ENCODE measurements at regions of chr3 and their contacts with region 1.

Region 1: GRCh38 chr3:41274944-41275668 is 75.8 kb downstream of the CTNNB1 start:
- DNase-seq: peak; percentile 84 to 91
- H3K4me3 ChIP-seq: no peak overlapping the region
- H3K4me3 Mint-ChIP-seq: peak overlapping the region; percentile 54
- H3K27ac Mint-ChIP-seq: peak overlapping the region; percentile 91
- H3K4me1 ChIP-seq: peaks cover 42% of the 10 kb centered on the region
- H3K4me1 Mint-ChIP-seq: peaks cover 41% of the 10 kb centered on the region
- H3K27me3 ChIP-seq: no peaks in the 10 kb centered on the region
- H3K27me3 Mint-ChIP-seq: no peaks in the 10 kb centered on the region
- CTCF ChIP-seq: no peak

Region 2: GRCh38 chr3:41204369-41204768 is 70.7 kb before region 1 on chr3:
- CTCF ChIA-PET with region 1: no interaction called
- POLR2A ChIA-PET with region 1: no interaction called
- intact Hi-C with region 1: loop called (anchors 1 kb)
- DNase-seq: no peak
- H3K4me3 ChIP-seq: no peak overlapping the region
- H3K4me3 Mint-ChIP-seq: no peak overlapping the region
- H3K27ac Mint-ChIP-seq: no peak overlapping the region
- H3K4me1 ChIP-seq: peaks cover 52% of the 10 kb centered on the region
- H3K4me1 Mint-ChIP-seq: peaks cover 32% of the 10 kb centered on the region
- H3K27me3 ChIP-seq: no peaks in the 10 kb centered on the region
- H3K27me3 Mint-ChIP-seq: no peaks in the 10 kb centered on the region
- CTCF ChIP-seq: no peak

Region 3: GRCh38 chr3:41244620-41245336 is 30.3 kb before region 1 on chr3:
- CTCF ChIA-PET with region 1: no interaction called
- POLR2A ChIA-PET with region 1: no interaction called
- intact Hi-C with region 1: loop called (anchors 2 kb)
- DNase-seq: no peak
- H3K4me3 ChIP-seq: no peak overlapping the region
- H3K4me3 Mint-ChIP-seq: no peak overlapping the region
- H3K27ac Mint-ChIP-seq: no peak overlapping the region
- H3K4me1 ChIP-seq: peaks cover 6% of the 10 kb centered on the region; the same call in 1 of the 2 replicates
- H3K4me1 Mint-ChIP-seq: no peaks in the 10 kb centered on the region
- H3K27me3 ChIP-seq: no peaks in the 10 kb centered on the region
- H3K27me3 Mint-ChIP-seq: no peaks in the 10 kb centered on the region
- CTCF ChIP-seq: no peak

Region 4: GRCh38 chr3:41259449-41260062 is 15.6 kb before region 1 on chr3:
- CTCF ChIA-PET with region 1: no interaction called
- POLR2A ChIA-PET with region 1: no interaction called
- intact Hi-C with region 1: no loop called
- DNase-seq: no peak
- H3K4me3 ChIP-seq: no peak overlapping the region
- H3K4me3 Mint-ChIP-seq: no peak overlapping the region
- H3K27ac Mint-ChIP-seq: no peak overlapping the region
- H3K4me1 ChIP-seq: no peaks in the 10 kb centered on the region
- H3K4me1 Mint-ChIP-seq: no peaks in the 10 kb centered on the region
- H3K27me3 ChIP-seq: no peaks in the 10 kb centered on the region
- H3K27me3 Mint-ChIP-seq: no peaks in the 10 kb centered on the region
- CTCF ChIP-seq: no peak

Region 5: DNA sequence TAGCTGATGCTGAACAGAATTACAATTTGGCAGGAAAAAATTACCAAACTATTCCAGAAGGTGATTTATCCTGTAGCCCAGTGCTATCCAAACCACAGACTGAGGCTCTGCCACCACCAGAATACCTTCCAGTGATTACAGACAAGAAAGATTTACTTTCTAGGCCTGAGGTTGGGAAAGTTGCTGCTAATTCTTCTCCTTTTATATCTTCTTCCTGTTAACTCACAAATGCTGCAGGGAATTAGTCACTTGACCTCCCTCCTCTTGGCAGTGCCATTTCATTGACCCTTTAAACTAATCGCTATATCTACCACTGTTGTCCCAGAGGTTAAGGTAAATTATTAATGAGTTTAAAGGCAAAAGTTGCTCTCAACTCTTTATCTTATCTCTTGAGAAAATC is 42.6 kb after region 1 on chr3:
- CTCF ChIA-PET with region 1: no interaction called
- POLR2A ChIA-PET with region 1: no interaction called
- intact Hi-C with region 1: loop called (anchors 5 kb)
- DNase-seq: peak; percentile 42 to 57
- H3K4me3 ChIP-seq: no peak overlapping the region
- H3K4me3 Mint-ChIP-seq: peak overlapping the region; percentile 6
- H3K27ac Mint-ChIP-seq: no peak overlapping the region
- H3K4me1 ChIP-seq: peaks cover 19% of the 10 kb centered on the region
- H3K4me1 Mint-ChIP-seq: no peaks in the 10 kb centered on the region
- H3K27me3 ChIP-seq: no peaks in the 10 kb centered on the region
- H3K27me3 Mint-ChIP-seq: no peaks in the 10 kb centered on the region
- CTCF ChIP-seq: no peak

Region 6: DNA sequence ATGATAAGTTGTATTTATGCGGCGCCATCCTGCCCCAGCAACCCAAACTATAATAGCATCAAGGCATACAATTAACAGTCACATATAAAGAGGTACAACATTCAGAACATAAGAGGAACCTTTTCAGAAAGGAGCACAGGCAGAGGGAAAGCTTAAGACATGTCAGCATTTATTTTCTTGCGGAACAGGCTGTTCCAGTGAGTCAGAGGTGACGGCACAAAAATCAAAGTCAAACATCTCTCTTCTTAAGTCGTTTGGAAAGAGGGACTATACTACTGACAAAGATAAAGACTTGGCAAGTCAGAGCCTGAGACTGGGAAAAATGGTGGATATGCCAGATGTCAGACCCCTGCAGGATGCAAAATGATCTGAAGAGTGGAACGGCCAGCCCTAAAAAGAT is 52.6 kb after region 1 on chr3:
- CTCF ChIA-PET with region 1: no interaction called
- POLR2A ChIA-PET with region 1: no interaction called
- intact Hi-C with region 1: loop called (anchors 2 kb)
- DNase-seq: peak in 1 of 2 experiments; percentile 43
- H3K4me3 ChIP-seq: no peak overlapping the region
- H3K4me3 Mint-ChIP-seq: peak overlapping the region; percentile 22
- H3K27ac Mint-ChIP-seq: peak overlapping the region; percentile 20
- H3K4me1 ChIP-seq: peaks cover 24% of the 10 kb centered on the region
- H3K4me1 Mint-ChIP-seq: peaks cover 31% of the 10 kb centered on the region
- H3K27me3 ChIP-seq: no peaks in the 10 kb centered on the region
- H3K27me3 Mint-ChIP-seq: no peaks in the 10 kb centered on the region
- CTCF ChIP-seq: no peak